H1 (cell line): ENCODE measurements at regions of chr9 and their contacts with region 1.

Region 1: DNA sequence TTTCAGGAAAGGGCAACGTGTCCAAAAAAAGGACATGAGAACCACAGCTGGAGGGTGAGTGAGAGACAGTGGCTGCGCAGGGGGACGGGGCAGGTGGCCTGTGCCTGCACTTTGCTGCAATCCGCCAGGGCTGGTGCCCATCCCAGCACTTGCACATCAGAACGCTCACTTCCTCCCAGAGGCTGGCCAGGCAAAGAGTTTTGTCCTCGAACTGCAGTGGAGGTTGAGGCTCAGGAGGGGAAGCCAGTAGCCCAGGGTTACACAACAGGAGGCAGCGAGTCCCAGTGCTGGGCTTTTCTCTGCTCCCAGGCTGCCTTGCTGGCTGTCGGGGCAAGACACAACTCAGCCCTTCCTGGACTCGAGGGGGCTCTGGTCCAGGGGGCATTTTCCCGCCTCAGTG is 33.1 kb downstream of the CRB2 start:
- DNase-seq: no peak
- H3K4me3 ChIP-seq: no peak overlapping the region
- H3K27ac ChIP-seq: no peak overlapping the region
- H3K4me1 ChIP-seq: peaks cover 0 to 8% (median 5%) of the 10 kb centered on the region in 4 experiments; a peak in 5 of 7 replicates
- H3K27me3 ChIP-seq: no peaks in the 10 kb centered on the region; a peak in 1 of 7 replicates
- CTCF ChIP-seq: no peak
- EP300 ChIP-seq: no peak
- POLR2A ChIP-seq: no peak
- RAD21 ChIP-seq: no peak

Region 2: DNA sequence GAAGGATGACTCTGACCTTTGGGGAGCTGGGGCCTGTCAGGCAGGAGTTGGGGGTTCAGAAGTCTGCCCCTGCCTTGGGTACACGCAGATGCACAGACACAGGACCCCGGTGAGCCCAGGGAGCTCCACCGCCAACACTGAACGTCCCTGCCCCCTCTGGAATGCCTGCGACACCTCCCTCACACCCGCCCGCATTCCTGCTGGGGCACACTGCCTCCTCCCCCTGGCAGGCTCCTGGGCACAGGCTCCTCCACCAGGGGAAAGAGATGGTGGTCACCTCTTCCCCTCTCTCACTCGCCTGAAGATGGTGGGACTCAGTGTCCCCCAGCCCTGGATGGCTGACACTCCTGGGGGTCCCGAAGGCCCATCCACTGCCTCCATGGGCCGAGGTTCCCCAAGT is 21.0 kb before region 1 on chr9:
- CTCF ChIA-PET with region 1: interaction called, 668 read pairs
- POLR2A ChIA-PET with region 1: interaction called, 7 read pairs
- DNase-seq: no peak
- H3K4me3 ChIP-seq: no peak overlapping the region
- H3K27ac ChIP-seq: no peak overlapping the region
- H3K4me1 ChIP-seq: peaks cover 0 to 24% (median 13%) of the 10 kb centered on the region in 4 experiments; a peak in 5 of 7 replicates
- H3K27me3 ChIP-seq: peaks cover 0 to 15% (median 14%) of the 10 kb centered on the region in 4 experiments; a peak in 5 of 7 replicates
- CTCF ChIP-seq: no peak
- EP300 ChIP-seq: no peak
- POLR2A ChIP-seq: no peak
- RAD21 ChIP-seq: no peak